Endothelial cell of umbilical vein (primary cell): ENCODE measurements at regions of chr1 and their contacts with region 1.

Region 1: DNA sequence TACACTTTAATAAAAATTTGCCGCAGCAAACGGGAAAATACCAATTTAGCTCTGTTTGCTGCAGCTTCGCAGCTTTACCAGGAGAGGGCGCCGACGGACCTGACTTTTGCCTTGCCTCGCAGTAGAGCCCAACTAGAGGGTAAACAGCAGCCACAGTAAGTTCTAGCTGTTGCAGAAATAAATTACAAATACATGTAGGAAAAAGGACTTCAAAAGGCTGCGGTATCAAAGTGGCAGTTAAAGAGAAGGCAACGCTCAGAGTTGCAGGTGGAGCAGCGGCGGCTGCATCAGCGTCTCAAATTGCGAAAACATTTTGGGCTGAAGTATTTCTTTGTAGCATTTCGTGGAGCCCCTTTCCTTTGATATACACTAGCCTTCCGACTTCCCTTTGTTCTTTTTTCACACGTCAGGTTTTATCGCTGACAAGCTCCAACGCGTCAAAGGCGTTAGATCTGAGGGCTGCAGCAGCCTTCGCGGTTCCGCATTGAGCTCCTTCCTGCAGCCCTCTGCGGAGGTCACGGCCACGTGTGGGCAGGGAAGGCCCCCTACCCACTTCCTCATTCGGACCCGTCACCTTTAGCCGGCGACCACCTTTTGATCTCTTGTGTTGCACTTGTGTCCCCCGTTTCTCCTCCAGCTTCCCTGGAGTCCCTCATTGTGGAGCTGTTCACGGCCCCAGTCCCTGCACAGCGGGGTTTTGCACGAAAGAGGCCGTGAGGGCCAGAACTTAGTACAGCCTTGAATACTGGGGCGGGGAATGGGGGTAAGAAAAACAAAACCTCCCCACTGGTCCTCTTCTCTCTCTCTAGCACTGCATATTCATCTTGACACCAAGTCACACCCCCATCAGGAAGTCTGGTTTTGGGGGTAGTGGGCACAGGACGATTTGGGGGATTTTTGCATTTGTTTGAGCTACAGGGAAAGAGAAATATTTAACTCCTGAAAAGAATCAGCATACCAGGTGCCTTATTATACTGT is 72.8 kb downstream of the S1PR1 start:
- DNase-seq: peak; percentile 79
- H3K4me3 ChIP-seq: peak overlapping the region in 2 of 3 experiments; percentile 27 to 63
- H3K27ac ChIP-seq: no peak overlapping the region
- H3K4me1 ChIP-seq: peaks cover 6% of the 10 kb centered on the region
- H3K27me3 ChIP-seq: peaks cover 0 to 1% of the 10 kb centered on the region in 2 experiments
- CTCF ChIP-seq: peak; percentile 87 to 90
- POLR2A ChIP-seq: no peak

Region 2: DNA sequence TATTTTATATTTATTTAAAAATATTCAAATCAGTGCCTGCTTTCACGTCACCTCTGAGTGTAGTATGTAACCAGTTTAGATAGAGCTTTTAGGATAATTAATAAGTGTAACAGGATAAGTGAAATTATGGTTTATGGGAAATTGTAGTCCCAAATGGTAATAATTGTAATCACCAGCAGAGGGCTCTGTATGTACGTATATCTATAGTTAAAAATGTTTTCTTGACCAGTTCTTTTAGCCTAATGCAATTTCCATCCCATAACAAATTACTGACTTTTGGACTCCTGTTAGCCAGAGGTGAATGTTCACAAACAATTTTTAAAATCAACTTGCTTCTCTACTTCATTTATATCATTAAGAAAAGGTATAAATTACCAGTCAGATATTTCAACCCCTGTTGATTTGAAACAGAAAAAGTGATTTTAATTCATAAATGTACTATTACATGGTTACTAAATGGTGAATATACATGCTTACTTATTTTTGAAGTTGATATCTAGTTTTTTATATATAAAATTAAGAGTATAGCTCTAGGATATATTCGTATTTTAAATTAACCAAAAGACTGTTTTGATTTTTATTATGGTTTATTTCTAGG is 388.4 kb before region 1 on chr1:
- CTCF ChIA-PET with region 1: interaction called, 5 read pairs
- POLR2A ChIA-PET with region 1: no interaction called
- dilution Hi-C with region 1: loop called (anchors 25 kb)
- intact Hi-C with region 1: no loop called
- DNase-seq: peak; percentile 81
- H3K4me3 ChIP-seq: no peak overlapping the region
- H3K27ac ChIP-seq: no peak overlapping the region
- H3K4me1 ChIP-seq: peaks cover 11% of the 10 kb centered on the region
- H3K27me3 ChIP-seq: no peaks in the 10 kb centered on the region
- CTCF ChIP-seq: peak; percentile 24
- POLR2A ChIP-seq: no peak

Region 3: GRCh38 chr1:100931716-100932115 is 377.9 kb before region 1 on chr1:
- CTCF ChIA-PET with region 1: no interaction called
- POLR2A ChIA-PET with region 1: no interaction called
- dilution Hi-C with region 1: no loop called
- intact Hi-C with region 1: no loop called
- DNase-seq: no peak
- H3K4me3 ChIP-seq: no peak overlapping the region
- H3K27ac ChIP-seq: no peak overlapping the region
- H3K4me1 ChIP-seq: no peaks in the 10 kb centered on the region
- H3K27me3 ChIP-seq: no peaks in the 10 kb centered on the region
- CTCF ChIP-seq: no peak
- POLR2A ChIP-seq: no peak

Region 4: GRCh38 chr1:101323535-101323934 is 13.9 kb after region 1 on chr1:
- CTCF ChIA-PET with region 1: interaction called, 25 read pairs
- POLR2A ChIA-PET with region 1: no interaction called
- dilution Hi-C with region 1: no loop called
- intact Hi-C with region 1: no loop called
- DNase-seq: no peak
- H3K4me3 ChIP-seq: no peak overlapping the region
- H3K27ac ChIP-seq: no peak overlapping the region
- H3K4me1 ChIP-seq: no peaks in the 10 kb centered on the region
- H3K27me3 ChIP-seq: peaks cover 5 to 8% of the 10 kb centered on the region in 2 experiments
- CTCF ChIP-seq: no peak
- POLR2A ChIP-seq: no peak

Region 5: GRCh38 chr1:101410048-101410878 is 100.6 kb after region 1 on chr1:
- CTCF ChIA-PET with region 1: interaction called, 10 read pairs
- POLR2A ChIA-PET with region 1: no interaction called
- dilution Hi-C with region 1: no loop called
- intact Hi-C with region 1: no loop called
- DNase-seq: peak; percentile 88
- H3K4me3 ChIP-seq: peak overlapping the region in 1 of 3 experiments; percentile 33
- H3K27ac ChIP-seq: peak overlapping the region; percentile 69
- H3K4me1 ChIP-seq: peaks cover 19% of the 10 kb centered on the region
- H3K27me3 ChIP-seq: no peaks in the 10 kb centered on the region
- CTCF ChIP-seq: no peak
- POLR2A ChIP-seq: no peak

Region 6: GRCh38 chr1:101444873-101445618 is 135.4 kb after region 1 on chr1:
- CTCF ChIA-PET with region 1: interaction called, 265 read pairs
- POLR2A ChIA-PET with region 1: no interaction called
- dilution Hi-C with region 1: no loop called
- intact Hi-C with region 1: no loop called
- DNase-seq: no peak
- H3K4me3 ChIP-seq: no peak overlapping the region
- H3K27ac ChIP-seq: no peak overlapping the region
- H3K4me1 ChIP-seq: no peaks in the 10 kb centered on the region
- H3K27me3 ChIP-seq: peaks cover 7 to 10% of the 10 kb centered on the region in 2 experiments
- CTCF ChIP-seq: no peak
- POLR2A ChIP-seq: no peak